ENCODE measurements at regions of chrX and their contacts with region 1.

Region 1: GRCh38 chrX:19772826-19773628 is 114.4 kb downstream of the SH3KBP1 start:
- DNase-seq: peak; percentile 56
- ATAC-seq: peak; percentile 93
- H3K4me3 ChIP-seq: 0 out of 2 replicates have a peak overlapping the region, but pooled peaks have one; percentile 5
- H3K27ac ChIP-seq: peak overlapping the region; percentile 77
- H3K4me1 ChIP-seq: peaks cover 17% of the 10 kb centered on the region
- H3K27me3 ChIP-seq: no peaks in the 10 kb centered on the region
- CTCF ChIP-seq: no peak

Region 2: GRCh38 chrX:19725641-19726040 is 47.4 kb before region 1 on chrX:
- CTCF ChIA-PET with region 1: no interaction called
- POLR2A ChIA-PET with region 1: no interaction called
- intact Hi-C with region 1: no loop called
- DNase-seq: no peak
- ATAC-seq: no peak
- H3K4me3 ChIP-seq: no peak overlapping the region
- H3K27ac ChIP-seq: no peak overlapping the region
- H3K4me1 ChIP-seq: no peaks in the 10 kb centered on the region; the same call in 1 of the 2 replicates
- H3K27me3 ChIP-seq: no peaks in the 10 kb centered on the region
- CTCF ChIP-seq: no peak

Region 3: GRCh38 chrX:19787305-19787815 is 14.3 kb after region 1 on chrX:
- CTCF ChIA-PET with region 1: no interaction called
- POLR2A ChIA-PET with region 1: no interaction called
- intact Hi-C with region 1: loop called (anchors 1 kb)
- DNase-seq: peak; percentile 51
- ATAC-seq: peak; percentile 84
- H3K4me3 ChIP-seq: no peak overlapping the region
- H3K27ac ChIP-seq: no peak overlapping the region
- H3K4me1 ChIP-seq: peaks cover 7% of the 10 kb centered on the region
- H3K27me3 ChIP-seq: no peaks in the 10 kb centered on the region
- CTCF ChIP-seq: no peak

Region 4: GRCh38 chrX:19846995-19847790 is 74.2 kb after region 1 on chrX:
- CTCF ChIA-PET with region 1: no interaction called
- POLR2A ChIA-PET with region 1: no interaction called
- intact Hi-C with region 1: no loop called
- DNase-seq: peak; percentile 59
- ATAC-seq: no peak; the same call in 1 of the 2 replicates
- H3K4me3 ChIP-seq: no peak overlapping the region
- H3K27ac ChIP-seq: no peak overlapping the region
- H3K4me1 ChIP-seq: peaks cover 15% of the 10 kb centered on the region
- H3K27me3 ChIP-seq: no peaks in the 10 kb centered on the region
- CTCF ChIP-seq: no peak

Region 5: GRCh38 chrX:19887911-19888879 is 115.2 kb after region 1 on chrX:
- CTCF ChIA-PET with region 1: no interaction called
- POLR2A ChIA-PET with region 1: no interaction called
- intact Hi-C with region 1: no loop called
- DNase-seq: peak; percentile 80
- ATAC-seq: peak; percentile 79
- H3K4me3 ChIP-seq: peak overlapping the region; percentile 73
- H3K27ac ChIP-seq: peak overlapping the region; percentile 77
- H3K4me1 ChIP-seq: peaks cover 30% of the 10 kb centered on the region
- H3K27me3 ChIP-seq: no peaks in the 10 kb centered on the region
- CTCF ChIP-seq: peak; percentile 75

Measured in PC-3 (cell line).